ENCODE measurements at regions of chr19 and their contacts with region 1.

Region 1: GRCh38 chr19:11018179-11018578 is 57.3 kb downstream of the SMARCA4 start:
- DNase-seq: no peak
- H3K4me3 Mint-ChIP-seq: no peak overlapping the region
- H3K27ac Mint-ChIP-seq: peak overlapping the region; percentile 80
- H3K4me1 Mint-ChIP-seq: peaks cover 14% of the 10 kb centered on the region
- H3K27me3 Mint-ChIP-seq: no peaks in the 10 kb centered on the region
- CTCF ChIP-seq: no peak

Region 2: GRCh38 chr19:10936661-10937084 is 81.5 kb before region 1 on chr19:
- CTCF ChIA-PET with region 1: no interaction called
- intact Hi-C with region 1: loop called (anchors 5 kb)
- DNase-seq: peak; percentile 47
- H3K4me3 Mint-ChIP-seq: no peak overlapping the region
- H3K27ac Mint-ChIP-seq: no peak overlapping the region
- H3K4me1 Mint-ChIP-seq: no peaks in the 10 kb centered on the region
- H3K27me3 Mint-ChIP-seq: no peaks in the 10 kb centered on the region
- CTCF ChIP-seq: no peak

Region 3: DNA sequence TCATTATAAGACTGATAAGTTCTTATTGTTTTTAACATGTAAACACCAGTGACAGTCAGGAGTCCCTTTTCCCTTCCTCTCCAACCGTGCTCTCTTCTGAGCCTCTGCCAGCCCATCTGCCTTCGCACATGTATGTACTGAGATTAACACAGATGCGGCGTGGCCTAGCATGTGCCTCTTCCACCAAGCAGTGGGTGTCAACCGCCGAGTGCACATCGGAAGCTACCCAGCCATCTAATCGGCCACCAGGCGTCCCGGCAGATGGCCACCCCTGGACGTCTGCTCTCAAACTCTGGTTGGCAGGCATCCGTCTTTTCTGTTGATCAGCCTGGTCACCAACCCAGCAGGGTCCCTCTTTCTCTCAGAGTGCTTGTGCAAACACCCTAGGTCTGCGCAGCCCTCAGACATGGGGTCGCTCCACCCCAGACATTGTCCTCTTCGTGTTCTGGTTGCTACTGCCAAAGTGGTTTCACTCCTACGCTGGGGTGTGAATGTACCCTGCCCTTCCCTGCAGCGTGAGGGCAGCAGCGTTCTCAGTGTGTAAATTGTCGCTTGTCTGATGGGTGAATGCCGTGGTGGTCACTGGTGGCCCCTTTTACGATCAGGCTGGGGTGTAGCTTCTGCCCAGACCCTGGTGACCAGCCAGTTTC is 13.4 kb after region 1 on chr19:
- CTCF ChIA-PET with region 1: no interaction called
- intact Hi-C with region 1: no loop called
- DNase-seq: no peak
- H3K4me3 Mint-ChIP-seq: no peak overlapping the region
- H3K27ac Mint-ChIP-seq: no peak overlapping the region
- H3K4me1 Mint-ChIP-seq: no peaks in the 10 kb centered on the region
- H3K27me3 Mint-ChIP-seq: no peaks in the 10 kb centered on the region
- CTCF ChIP-seq: no peak

Region 4: DNA sequence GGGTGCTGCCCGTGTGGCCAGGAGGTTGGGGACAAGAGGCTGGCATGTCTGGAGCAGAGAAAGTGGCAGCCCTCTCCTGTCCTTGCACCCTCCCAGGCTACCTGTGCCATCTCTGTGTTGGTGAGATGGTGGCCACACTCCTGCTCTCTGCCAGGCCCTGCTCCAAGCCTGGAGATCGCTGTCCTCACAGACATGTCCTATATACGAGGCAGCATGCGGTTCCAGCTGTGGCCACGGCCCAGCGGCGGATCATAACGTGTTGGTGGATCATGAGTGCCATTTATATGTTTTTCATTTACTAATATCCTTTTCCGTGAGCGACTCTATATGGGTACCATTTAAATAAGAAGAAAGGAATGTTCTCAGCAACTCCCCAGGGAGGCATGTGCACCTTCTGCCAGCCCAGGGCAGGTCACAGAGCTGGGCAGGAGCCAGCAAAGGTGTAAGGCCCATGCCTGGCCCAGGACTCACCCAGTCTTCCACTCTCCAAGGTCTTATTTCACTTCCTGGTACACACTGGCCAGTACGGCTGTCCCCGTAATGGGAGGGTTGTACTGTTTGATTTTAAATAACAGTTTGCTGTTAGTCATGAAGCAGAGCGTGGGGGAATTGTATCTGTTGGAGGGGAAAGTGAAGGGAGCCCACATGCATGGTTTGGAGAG is 23.9 kb after region 1 on chr19:
- CTCF ChIA-PET with region 1: no interaction called
- intact Hi-C with region 1: no loop called
- DNase-seq: peak; percentile 82
- H3K4me3 Mint-ChIP-seq: peak overlapping the region; percentile 8
- H3K27ac Mint-ChIP-seq: peak overlapping the region; percentile 79
- H3K4me1 Mint-ChIP-seq: peaks cover 21% of the 10 kb centered on the region
- H3K27me3 Mint-ChIP-seq: no peaks in the 10 kb centered on the region
- CTCF ChIP-seq: no peak

Measured in Calu3 (cell line).